ENCODE measurements at regions of chr2 and their contacts with region 1.

Region 1: DNA sequence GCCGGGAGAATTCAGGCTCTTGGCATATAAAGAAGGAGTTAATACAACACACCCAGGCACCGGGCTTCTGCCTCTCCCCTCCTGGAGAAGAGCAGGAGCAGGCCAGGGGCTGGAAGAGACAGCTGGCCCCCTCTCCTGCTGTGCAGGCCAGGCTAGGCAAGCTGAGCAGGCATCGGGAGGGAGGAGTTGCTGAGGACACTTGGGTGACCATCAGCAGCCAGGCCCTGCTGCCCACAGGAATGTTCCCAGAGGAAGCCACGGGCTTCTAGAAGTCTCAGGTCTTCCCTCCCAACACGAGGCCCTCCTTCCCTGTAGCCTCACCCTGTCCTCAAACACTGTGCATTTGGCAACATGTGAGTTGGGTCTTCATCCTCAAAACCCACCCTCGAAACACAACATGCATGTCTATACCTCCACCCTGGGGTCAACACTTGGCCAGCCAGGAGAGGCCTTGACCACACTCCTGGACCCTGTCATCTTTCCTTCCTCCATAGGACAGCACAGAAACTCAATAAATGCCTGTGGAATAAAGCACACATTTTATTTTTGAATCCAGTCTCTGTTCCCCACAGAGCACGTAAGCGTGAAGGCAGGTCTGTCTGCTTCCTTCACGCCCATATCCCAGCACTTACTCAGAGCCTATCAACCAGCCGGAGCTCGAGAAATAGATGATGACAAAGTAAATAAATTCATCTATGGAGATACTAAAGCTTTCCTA is 433.8 kb upstream of the ID2 start:
- DNase-seq: peak in 1 of 2 donors; percentile 78
- H3K4me3 ChIP-seq: peak overlapping the region in 1 of 2 donors; percentile 48
- H3K27ac ChIP-seq: peak overlapping the region; percentile 98 to 99
- H3K4me1 ChIP-seq: peaks cover 11 to 32% of the 10 kb centered on the region in 2 donors
- H3K27me3 ChIP-seq: no peaks in the 10 kb centered on the region
- CTCF ChIP-seq: no peak

Region 2: GRCh38 chr2:7950035-7950612 is 297.9 kb before region 1 on chr2:
- intact Hi-C with region 1: loop called (anchors 1 kb)
- DNase-seq: peak in 1 of 2 donors; percentile 75
- H3K4me3 ChIP-seq: no peak overlapping the region
- H3K27ac ChIP-seq: peak overlapping the region; percentile 73 to 77
- H3K4me1 ChIP-seq: peaks cover 0 to 15% of the 10 kb centered on the region in 2 donors
- H3K27me3 ChIP-seq: no peaks in the 10 kb centered on the region
- CTCF ChIP-seq: no peak

Region 3: GRCh38 chr2:8004250-8004681 is 243.8 kb before region 1 on chr2:
- intact Hi-C with region 1: loop called (anchors 2 kb)
- DNase-seq: peak in 1 of 2 donors; percentile 77
- H3K4me3 ChIP-seq: peak overlapping the region; percentile 32 to 48
- H3K27ac ChIP-seq: peak overlapping the region; percentile 77 to 88
- H3K4me1 ChIP-seq: peaks cover 3 to 4% of the 10 kb centered on the region in 2 donors
- H3K27me3 ChIP-seq: no peaks in the 10 kb centered on the region
- CTCF ChIP-seq: no peak

Region 4: DNA sequence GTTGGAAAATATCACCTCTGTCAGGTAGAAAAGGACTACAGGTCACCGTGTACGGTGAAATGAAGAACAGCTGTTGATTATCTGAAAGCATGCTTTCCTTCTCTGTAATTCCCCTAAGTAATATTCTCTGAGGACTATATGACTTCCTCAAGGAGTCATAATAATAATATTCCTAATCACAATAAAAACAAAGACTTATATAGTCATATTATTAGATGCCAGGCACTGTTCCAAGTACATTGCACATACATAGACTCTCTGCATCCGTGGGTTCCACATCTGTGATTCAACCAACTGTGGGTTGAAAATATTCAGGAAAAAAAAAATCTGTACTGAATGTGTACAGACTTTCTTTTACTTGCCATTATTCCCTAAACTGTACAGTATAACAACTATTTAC is 78.6 kb before region 1 on chr2:
- intact Hi-C with region 1: loop called (anchors 2 kb)
- DNase-seq: no peak
- H3K4me3 ChIP-seq: no peak overlapping the region
- H3K27ac ChIP-seq: peak overlapping the region; percentile 28 to 63
- H3K4me1 ChIP-seq: peaks cover 0 to 7% of the 10 kb centered on the region in 2 donors
- H3K27me3 ChIP-seq: no peaks in the 10 kb centered on the region
- CTCF ChIP-seq: no peak

Region 5: GRCh38 chr2:8215159-8215863 is 32.8 kb before region 1 on chr2:
- intact Hi-C with region 1: loop called (anchors 1 kb)
- DNase-seq: no peak
- H3K4me3 ChIP-seq: no peak overlapping the region
- H3K27ac ChIP-seq: no peak overlapping the region
- H3K4me1 ChIP-seq: peaks cover 1 to 4% of the 10 kb centered on the region in 2 donors
- H3K27me3 ChIP-seq: no peaks in the 10 kb centered on the region
- CTCF ChIP-seq: no peak

Region 6: DNA sequence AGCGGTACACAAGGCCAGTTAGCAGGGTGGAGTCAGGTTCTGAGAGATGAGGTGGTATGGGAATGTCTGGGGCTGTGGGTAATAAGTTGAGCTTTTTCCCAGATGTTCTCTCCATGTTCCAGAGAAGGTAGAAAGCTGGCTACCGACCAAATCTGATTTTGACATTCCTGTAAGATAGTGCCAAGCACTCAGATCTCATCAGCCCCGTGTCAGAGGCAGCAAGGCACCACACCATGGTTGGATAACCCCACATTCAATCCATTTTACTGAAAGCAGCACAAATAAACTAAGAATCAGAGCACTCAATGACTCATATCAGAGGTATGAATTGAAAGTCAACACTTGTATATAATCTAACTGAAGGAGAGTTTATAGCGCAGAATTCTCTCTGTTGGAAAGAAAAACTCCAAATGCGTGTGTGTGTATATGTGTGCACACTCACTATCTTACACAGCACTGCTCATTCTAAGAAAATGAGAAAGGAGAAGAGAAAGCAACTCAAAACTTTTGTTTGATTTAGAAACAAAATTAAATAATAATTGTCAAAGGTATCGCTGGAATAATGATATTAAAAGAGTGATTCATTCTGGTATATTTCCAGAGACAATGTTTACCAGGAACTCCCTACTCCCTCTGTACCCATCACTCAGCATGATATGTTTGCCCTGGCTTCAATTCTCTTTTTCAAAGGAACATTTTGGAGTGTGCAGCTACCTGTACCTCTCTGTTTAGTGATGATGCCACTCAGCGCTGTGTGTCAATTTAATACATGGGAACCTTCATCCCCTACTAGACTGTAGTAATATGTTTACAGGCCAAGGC is 58.7 kb after region 1 on chr2:
- intact Hi-C with region 1: loop called (anchors 2 kb)
- DNase-seq: peak in 1 of 2 donors; percentile 42
- H3K4me3 ChIP-seq: no peak overlapping the region
- H3K27ac ChIP-seq: peak overlapping the region; percentile 69 to 82
- H3K4me1 ChIP-seq: peaks cover 0 to 24% of the 10 kb centered on the region in 2 donors
- H3K27me3 ChIP-seq: no peaks in the 10 kb centered on the region
- CTCF ChIP-seq: no peak